ENCODE measurements at regions of chr9 and their contacts with region 1.

Region 1: GRCh38 chr9:36268007-36268427 is 9.8 kb upstream of the GNE start:
- DNase-seq: no peak
- ATAC-seq: no peak
- H3K4me3 ChIP-seq: no peak overlapping the region
- H3K27ac ChIP-seq: no peak overlapping the region
- H3K4me1 ChIP-seq: no peaks in the 10 kb centered on the region
- H3K27me3 ChIP-seq: no peaks in the 10 kb centered on the region

Region 2: GRCh38 chr9:36317764-36318163 is 49.7 kb after region 1 on chr9:
- intact Hi-C with region 1: loop called in 1 of 2 experiments (anchors 10 kb)
- DNase-seq: no peak
- ATAC-seq: no peak
- H3K4me3 ChIP-seq: no peak overlapping the region
- H3K27ac ChIP-seq: no peak overlapping the region
- H3K4me1 ChIP-seq: no peaks in the 10 kb centered on the region
- H3K27me3 ChIP-seq: no peaks in the 10 kb centered on the region

Measured in aorta (tissue), 5 donors.